BJ (cell line): ENCODE measurements at regions of chr1 and their contacts with region 1.

Region 1: DNA sequence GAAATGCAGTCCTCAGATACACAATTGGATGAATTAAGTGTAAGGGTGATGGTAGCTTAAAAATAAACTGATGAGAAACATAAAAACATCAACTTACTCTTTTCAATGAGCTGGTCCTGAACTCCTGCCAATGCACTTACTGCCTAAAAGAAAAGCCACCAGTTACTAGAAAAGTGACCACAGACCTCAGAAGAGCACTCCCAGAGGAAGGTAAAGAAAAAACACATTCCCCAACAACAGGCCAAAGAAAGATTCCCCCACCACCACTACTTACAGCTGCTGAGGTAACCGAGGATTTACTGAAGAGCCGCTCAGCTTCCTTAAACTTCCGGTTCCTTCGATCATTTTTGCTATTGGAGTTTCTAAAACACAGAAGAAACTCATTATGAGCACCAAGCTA is 5.4 kb downstream of the MEAF6 start:
- DNase-seq: no peak
- H3K4me3 ChIP-seq: no peak overlapping the region
- H3K27me3 ChIP-seq: no peaks in the 10 kb centered on the region
- CTCF ChIP-seq: 0 out of 2 replicates have a peak, but pooled peaks have one; percentile 26

Region 2: GRCh38 chr1:37498872-37499617 is 10.1 kb before region 1 on chr1:
- CTCF ChIA-PET with region 1: interaction called, 17 read pairs
- POLR2A ChIA-PET with region 1: no interaction called
- DNase-seq: no peak
- H3K4me3 ChIP-seq: no peak overlapping the region
- H3K27me3 ChIP-seq: no peaks in the 10 kb centered on the region
- CTCF ChIP-seq: no peak